Activated T-helper 1 cell treated with anti-CD3 and anti-CD28 coated beads, Interleukin-12 subunit alpha, Interleukin-12 subunit beta, Interleukin-2, Interleukin-4 antibody, amounts not matched to agents 30 ng/mL and 10 ng/mL and 1 ng/mL, durations not matched to agents 14 hours and 24 hours and 36 hours (primary cell): ENCODE measurements at regions of chr5 and their contacts with region 1.

Region 1: GRCh38 chr5:141557681-141558136 is 61.1 kb downstream of the DIAPH1 start:
- DNase-seq: peak; percentile 48
- H3K4me3 Mint-ChIP-seq: no peak overlapping the region
- H3K27ac Mint-ChIP-seq: peak overlapping the region; percentile 76
- H3K4me1 Mint-ChIP-seq: peaks cover 25% of the 10 kb centered on the region
- H3K27me3 Mint-ChIP-seq: no peaks in the 10 kb centered on the region

Region 2: GRCh38 chr5:141084487-141084990 is 473.2 kb before region 1 on chr5:
- intact Hi-C with region 1: loop called (anchors 10 kb)
- DNase-seq: no peak
- H3K4me3 Mint-ChIP-seq: peak overlapping the region; percentile 80
- H3K27ac Mint-ChIP-seq: no peak overlapping the region
- H3K4me1 Mint-ChIP-seq: peaks cover 8% of the 10 kb centered on the region
- H3K27me3 Mint-ChIP-seq: peaks cover 3% of the 10 kb centered on the region

Region 3: DNA sequence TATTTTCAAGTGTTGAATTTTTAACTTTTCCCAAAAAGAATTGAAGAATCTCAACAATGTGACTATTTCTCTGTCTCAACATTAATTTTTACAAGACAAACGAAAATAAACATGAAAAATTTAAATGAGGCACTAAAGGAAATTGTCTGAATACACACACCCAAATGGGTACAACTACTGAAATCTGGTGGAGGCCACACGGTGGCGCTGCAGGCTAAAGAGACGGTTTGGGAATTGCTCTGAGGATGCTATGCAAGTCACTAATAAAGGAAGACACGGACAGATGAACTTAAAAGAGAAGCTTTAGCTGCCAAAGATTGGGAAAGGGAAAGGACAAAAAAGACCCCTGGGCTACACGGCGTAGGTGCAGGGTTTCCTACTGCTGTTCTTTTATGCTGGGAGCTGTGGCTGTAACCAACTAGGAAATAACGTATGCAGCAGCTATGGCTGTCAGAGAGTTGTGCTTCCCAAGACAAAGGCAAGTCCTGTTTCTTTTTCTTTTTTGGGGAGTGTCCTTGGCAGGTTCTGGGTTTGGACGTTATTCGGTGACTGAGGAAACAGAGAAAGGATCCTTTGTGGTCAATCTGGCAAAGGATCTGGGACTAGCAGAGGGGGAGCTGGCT is 365.5 kb before region 1 on chr5 and contains the start of gene PCDHB10:
- intact Hi-C with region 1: loop called (anchors 10 kb)
- DNase-seq: no peak
- H3K4me3 Mint-ChIP-seq: no peak within 1 kb of the TSS
- H3K27ac Mint-ChIP-seq: no peak within 1 kb of the TSS
- H3K4me1 Mint-ChIP-seq: no peaks in the 10 kb centered on the region
- H3K27me3 Mint-ChIP-seq: peaks cover 5% of the 10 kb centered on the region
- total RNA-seq, gene PCDHB10: not detected in 2 replicates

Region 4: GRCh38 chr5:141326088-141326854 is 231.4 kb before region 1 on chr5:
- intact Hi-C with region 1: loop called (anchors 1 kb)
- DNase-seq: peak; percentile 59
- H3K4me3 Mint-ChIP-seq: peak overlapping the region; percentile 98
- H3K27ac Mint-ChIP-seq: peak overlapping the region; percentile 83
- H3K4me1 Mint-ChIP-seq: peaks cover 16% of the 10 kb centered on the region
- H3K27me3 Mint-ChIP-seq: peaks cover 12% of the 10 kb centered on the region

Region 5: DNA sequence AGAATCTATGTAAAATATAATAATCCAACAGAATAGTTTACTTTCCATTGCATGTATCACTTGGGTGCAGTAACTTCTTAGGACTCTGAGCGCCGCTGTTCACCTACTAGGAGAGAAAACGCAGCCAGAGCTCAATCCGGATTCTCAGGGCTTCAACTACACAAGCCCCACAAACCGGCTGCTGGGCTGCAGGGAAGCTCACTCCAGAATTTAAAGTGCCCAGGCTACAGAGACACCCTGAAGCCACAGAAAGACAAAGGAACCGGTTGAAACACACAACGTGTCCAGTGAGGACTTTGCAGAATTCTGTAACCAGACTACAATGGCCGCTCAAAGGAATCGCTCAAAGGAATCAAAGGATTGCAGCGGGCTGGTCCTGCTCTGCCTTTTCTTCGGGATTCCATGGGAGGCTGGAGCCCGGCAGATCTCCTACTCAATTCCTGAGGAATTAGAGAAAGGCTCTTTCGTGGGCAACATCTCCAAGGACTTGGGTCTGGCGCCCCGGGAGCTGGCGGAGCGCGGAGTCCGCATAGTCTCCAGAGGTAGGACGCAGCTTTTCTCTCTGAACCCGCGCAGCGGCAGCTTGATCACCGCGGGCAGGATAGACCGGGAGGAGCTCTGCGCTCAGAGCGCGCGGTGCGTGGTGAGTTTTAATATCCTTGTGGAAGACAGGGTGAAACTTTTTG is 144.7 kb before region 1 on chr5 and contains the start of gene PCDHGA10:
- intact Hi-C with region 1: loop called (anchors 1 kb)
- DNase-seq: peak; percentile 33
- H3K4me3 Mint-ChIP-seq: peak within 1 kb of the TSS; percentile 84
- H3K27ac Mint-ChIP-seq: peak within 1 kb of the TSS; percentile 68
- H3K4me1 Mint-ChIP-seq: peaks cover 13% of the 10 kb centered on the region
- H3K27me3 Mint-ChIP-seq: peaks cover 44% of the 10 kb centered on the region
- total RNA-seq, gene PCDHGA10: 0.10 and 0.13 TPM in 2 replicates

Region 6: DNA sequence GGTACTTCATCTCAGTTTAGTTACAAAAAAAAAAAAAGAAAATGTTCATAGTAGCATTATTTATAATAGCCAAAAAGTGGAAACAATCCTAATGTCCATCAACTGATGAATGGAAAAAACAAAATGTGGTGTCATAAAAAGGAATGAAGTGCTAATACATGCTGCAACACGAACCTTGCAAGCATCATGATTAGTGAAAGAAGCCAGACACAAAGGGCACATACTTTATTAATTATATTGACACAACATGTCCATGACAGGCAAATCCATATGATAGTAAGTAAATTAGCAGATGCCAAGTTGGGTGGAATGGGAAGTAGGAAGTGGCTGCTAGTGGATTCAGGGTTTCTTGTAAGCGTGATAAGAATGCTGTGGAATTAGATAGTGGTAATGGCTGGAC is 14.7 kb before region 1 on chr5:
- intact Hi-C with region 1: loop called (anchors 2 kb)
- DNase-seq: no peak
- H3K4me3 Mint-ChIP-seq: no peak overlapping the region
- H3K27ac Mint-ChIP-seq: no peak overlapping the region
- H3K4me1 Mint-ChIP-seq: no peaks in the 10 kb centered on the region
- H3K27me3 Mint-ChIP-seq: no peaks in the 10 kb centered on the region